Activated CD4-positive, alpha-beta memory T cell treated with anti-CD3 and anti-CD28 coated beads for 36 hours (primary cell): ENCODE measurements at regions of chr22 and their contacts with region 1.

Region 1: DNA sequence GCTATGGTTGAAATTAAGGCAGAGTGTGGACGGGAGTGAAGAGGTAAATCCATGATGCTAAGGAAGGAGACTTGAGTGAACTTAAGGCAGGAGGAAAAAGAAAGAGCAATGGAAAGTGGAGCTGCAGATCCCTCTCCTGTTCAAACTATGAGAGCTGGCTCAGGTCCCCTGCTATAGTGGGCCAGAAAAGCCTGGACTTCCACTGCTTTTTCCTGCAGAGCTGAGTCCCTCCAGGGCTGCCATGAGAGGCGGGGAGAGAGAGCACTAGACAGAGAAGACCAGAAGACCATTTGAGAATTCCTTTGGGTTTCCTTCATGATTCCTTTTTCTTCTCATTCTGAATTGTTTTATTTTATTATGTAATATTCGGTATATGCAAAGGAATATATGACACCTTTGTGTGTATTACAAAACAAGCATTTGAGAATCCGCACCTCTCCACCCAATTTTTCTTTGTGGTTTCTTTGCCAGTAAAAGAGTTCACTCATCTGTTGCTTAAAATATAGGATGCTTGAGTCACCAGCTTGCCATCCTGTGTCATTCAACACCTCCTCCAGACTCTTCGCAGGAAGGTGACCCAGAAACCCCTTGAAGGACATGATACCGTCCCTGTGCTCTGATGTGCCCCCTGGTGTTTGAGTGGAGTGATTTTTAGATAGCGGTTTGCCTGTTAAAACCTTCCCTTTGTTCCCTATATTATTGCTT is 24.4 kb downstream of the SREBF2 start:
- DNase-seq: peak; percentile 89
- H3K4me3 Mint-ChIP-seq: peak overlapping the region; percentile 28
- H3K27ac Mint-ChIP-seq: peak overlapping the region; percentile 95
- H3K4me1 Mint-ChIP-seq: peaks cover 80% of the 10 kb centered on the region
- H3K27me3 Mint-ChIP-seq: no peaks in the 10 kb centered on the region

Region 2: DNA sequence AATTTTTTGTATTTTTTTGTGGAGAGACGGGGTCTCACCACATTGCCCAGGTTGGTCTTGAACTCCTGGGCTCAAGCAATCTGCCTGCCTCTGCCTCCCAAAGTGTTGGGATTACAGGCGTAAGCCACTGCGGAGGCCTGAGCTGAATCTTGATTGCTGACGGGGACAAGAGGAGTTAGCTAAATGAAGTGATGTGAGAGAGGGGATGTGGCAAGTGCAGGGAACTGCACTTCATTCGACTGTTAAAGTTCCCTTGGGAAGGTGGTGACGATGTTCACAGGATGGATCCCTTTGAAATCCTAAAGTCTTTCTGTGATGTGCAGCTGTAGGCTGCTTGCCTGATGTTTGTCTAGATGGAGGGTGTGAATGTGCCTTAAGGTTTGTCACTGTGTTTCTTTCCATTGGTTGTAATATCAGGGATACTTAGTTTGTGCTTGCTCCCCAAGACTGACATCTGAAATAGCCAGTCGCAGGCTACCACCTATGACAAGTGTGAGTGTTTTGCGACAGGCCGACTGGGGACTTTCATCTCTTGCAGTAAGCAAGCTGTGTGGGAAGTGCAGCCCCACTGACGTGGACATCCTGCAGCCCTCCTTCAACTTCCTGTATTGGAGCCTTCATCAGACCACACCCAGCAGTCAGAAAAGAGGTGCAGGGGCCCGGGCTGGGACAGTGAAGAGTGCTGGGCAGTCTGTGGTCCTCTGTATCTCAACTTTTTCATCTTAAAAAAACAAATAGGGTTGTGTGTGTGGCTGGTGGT is 76.4 kb before region 1 on chr22:
- CTCF ChIA-PET with region 1: interaction called, 6 read pairs
- POLR2A ChIA-PET with region 1: interaction called, 12 read pairs
- intact Hi-C with region 1: loop called (anchors 1 kb)
- DNase-seq: peak; percentile 96
- H3K4me3 Mint-ChIP-seq: peak overlapping the region; percentile 84
- H3K27ac Mint-ChIP-seq: peak overlapping the region; percentile 92
- H3K4me1 Mint-ChIP-seq: peaks cover 43% of the 10 kb centered on the region
- H3K27me3 Mint-ChIP-seq: no peaks in the 10 kb centered on the region

Region 3: GRCh38 chr22:41822317-41823060 is 34.8 kb before region 1 on chr22:
- CTCF ChIA-PET with region 1: interaction called, 7 read pairs
- POLR2A ChIA-PET with region 1: interaction called, 6 read pairs
- intact Hi-C with region 1: loop called (anchors 1 kb)
- DNase-seq: peak; percentile 46
- H3K4me3 Mint-ChIP-seq: no peak overlapping the region
- H3K27ac Mint-ChIP-seq: peak overlapping the region; percentile 82
- H3K4me1 Mint-ChIP-seq: peaks cover 39% of the 10 kb centered on the region
- H3K27me3 Mint-ChIP-seq: no peaks in the 10 kb centered on the region

Region 4: GRCh38 chr22:41841085-41841659 is 16.1 kb before region 1 on chr22:
- CTCF ChIA-PET with region 1: interaction called, 69 read pairs
- POLR2A ChIA-PET with region 1: interaction called, 66 read pairs
- intact Hi-C with region 1: loop called (anchors 1 kb)
- DNase-seq: no peak
- H3K4me3 Mint-ChIP-seq: no peak overlapping the region
- H3K27ac Mint-ChIP-seq: peak overlapping the region; percentile 39
- H3K4me1 Mint-ChIP-seq: peaks cover 88% of the 10 kb centered on the region
- H3K27me3 Mint-ChIP-seq: no peaks in the 10 kb centered on the region

Region 5: DNA sequence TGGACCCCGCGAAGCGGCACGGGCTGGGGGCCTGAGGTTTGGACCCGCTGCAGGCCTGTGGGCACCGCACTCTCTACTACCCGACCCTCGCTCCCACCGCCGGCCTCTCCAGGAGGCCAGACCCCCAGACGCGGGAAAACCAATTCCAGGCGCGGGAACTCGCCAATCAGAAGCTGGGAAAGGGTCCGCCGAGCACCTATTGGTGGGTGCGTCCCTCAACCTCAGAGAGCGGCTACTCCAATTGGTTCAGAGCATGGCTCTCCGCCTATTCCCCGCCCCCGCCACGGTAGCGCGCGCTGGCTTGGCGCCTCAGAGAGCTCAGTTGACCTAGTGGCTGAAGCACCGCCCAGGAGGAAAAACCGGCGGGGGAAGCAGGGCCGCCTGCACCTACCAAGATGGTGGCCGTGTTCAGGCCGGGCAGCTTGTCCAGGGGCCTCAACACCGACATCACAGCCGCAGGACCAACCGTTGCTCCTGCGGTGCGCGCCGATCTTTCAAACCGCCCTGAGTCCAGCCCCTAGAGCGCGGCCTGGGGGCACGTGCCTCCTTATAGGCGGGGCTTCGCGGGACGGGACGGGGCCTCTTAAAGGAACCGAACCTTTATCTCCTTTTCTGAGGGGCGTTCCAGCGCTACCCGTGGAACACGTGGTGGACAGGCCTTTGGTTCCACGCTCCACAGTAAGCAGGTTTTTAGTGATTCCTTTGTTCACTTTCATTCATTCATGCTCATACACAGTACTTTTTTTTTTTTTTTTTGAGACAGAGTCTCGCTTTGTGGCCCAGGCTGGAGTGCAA is 89.5 kb after region 1 on chr22 and contains the start of gene CENPM:
- CTCF ChIA-PET with region 1: interaction called, 24 read pairs
- POLR2A ChIA-PET with region 1: interaction called, 15 read pairs
- intact Hi-C with region 1: no loop called
- DNase-seq: peak; percentile 96
- H3K4me3 Mint-ChIP-seq: peak within 1 kb of the TSS; percentile 98
- H3K27ac Mint-ChIP-seq: peak within 1 kb of the TSS; percentile 87
- H3K4me1 Mint-ChIP-seq: peaks cover 52% of the 10 kb centered on the region
- H3K27me3 Mint-ChIP-seq: no peaks in the 10 kb centered on the region
- total RNA-seq, gene CENPM: 99.9 to 106 TPM